ENCODE measurements at regions of chr16 and their contacts with region 1.

Region 1: DNA sequence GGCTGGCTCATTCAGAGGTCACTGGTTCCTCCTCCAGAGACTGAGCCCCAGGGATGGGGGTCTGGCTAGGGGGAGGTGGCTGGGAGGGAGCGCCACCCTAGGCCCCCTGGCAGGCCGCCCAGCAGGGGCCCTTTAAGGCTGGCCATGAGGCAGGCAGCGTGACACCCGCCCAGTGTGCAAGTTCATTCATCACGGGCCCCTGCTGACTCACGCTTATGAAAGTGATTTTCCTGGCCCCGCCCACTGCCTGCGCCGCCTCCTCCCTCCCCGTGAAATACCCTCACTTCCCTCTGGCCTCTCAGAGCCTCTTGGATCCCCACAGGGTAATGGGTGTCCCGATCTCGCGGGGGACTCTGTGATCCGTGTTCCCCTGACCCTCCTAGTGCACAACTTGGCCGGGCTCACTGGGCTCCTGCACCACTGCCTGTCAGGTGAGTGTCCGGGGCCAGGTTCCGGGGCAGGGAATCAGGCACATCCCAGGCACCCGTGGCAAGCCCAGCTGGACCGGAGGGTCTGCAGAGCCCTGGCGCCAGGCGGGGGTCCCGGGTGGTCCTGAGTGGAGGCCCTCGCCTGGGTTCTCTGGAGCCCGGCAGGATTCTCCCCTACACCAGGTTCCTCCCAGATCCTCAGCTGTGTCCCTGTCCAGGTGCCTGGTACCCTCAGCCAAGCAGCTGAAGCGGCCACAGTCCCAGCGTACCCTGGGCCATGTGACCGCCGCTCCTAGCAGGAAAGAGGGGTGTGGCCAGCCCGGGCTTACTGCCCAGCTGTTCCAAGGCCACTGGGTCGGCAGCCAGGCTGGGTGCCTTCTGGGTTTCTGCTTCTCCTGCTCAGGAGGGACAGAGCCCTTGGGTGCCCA is at the start of gene OSGIN1:
- DNase-seq: peak; percentile 90 to 94
- ATAC-seq: peak; percentile 90 to 96 (median 94)
- H3K4me3 ChIP-seq: peak within 1 kb of the TSS; percentile 43 to 73 (median 63)
- H3K27ac ChIP-seq: peak within 1 kb of the TSS; percentile 78 to 97 (median 92)
- H3K4me1 ChIP-seq: peaks cover 11 to 45% (median 31%) of the 10 kb centered on the region in 9 donors
- H3K27me3 ChIP-seq: no peaks in the 10 kb centered on the region
- CTCF ChIP-seq: no peak
- total RNA-seq, gene OSGIN1: 3.2 to 14.5 (median 5.3) TPM

Region 2: GRCh38 chr16:83913245-83913633 is 39.9 kb before region 1 on chr16:
- intact Hi-C with region 1: loop called in 1 of 10 experiments (anchors 5 kb)
- DNase-seq: peak; percentile 78 to 85
- ATAC-seq: peak; percentile 94 to 97 (median 96)
- H3K4me3 ChIP-seq: no peak overlapping the region
- H3K27ac ChIP-seq: peak overlapping the region; percentile 24 to 92 (median 74)
- H3K4me1 ChIP-seq: peaks cover 2 to 33% (median 15%) of the 10 kb centered on the region in 9 donors
- H3K27me3 ChIP-seq: no peaks in the 10 kb centered on the region
- CTCF ChIP-seq: peak in 2 of 9 donors; percentile 16 to 17

Region 3: GRCh38 chr16:83926726-83927397 is 26.3 kb before region 1 on chr16:
- intact Hi-C with region 1: loop called in 1 of 10 experiments (anchors 2 kb)
- DNase-seq: peak; percentile 58 to 76
- ATAC-seq: peak; percentile 49 to 76 (median 70)
- H3K4me3 ChIP-seq: no peak overlapping the region
- H3K27ac ChIP-seq: no peak overlapping the region
- H3K4me1 ChIP-seq: peaks cover 0 to 33% (median 17%) of the 10 kb centered on the region in 9 donors
- H3K27me3 ChIP-seq: no peaks in the 10 kb centered on the region
- CTCF ChIP-seq: peak; percentile 87 to 97 (median 96)

Region 4: GRCh38 chr16:83996481-83997252 is 43.5 kb after region 1 on chr16:
- intact Hi-C with region 1: no loop called
- DNase-seq: no peak
- ATAC-seq: no peak
- H3K4me3 ChIP-seq: no peak overlapping the region
- H3K27ac ChIP-seq: no peak overlapping the region
- H3K4me1 ChIP-seq: peaks cover 0 to 27% (median 10%) of the 10 kb centered on the region in 9 donors
- H3K27me3 ChIP-seq: peaks cover 0 to 35% (median 12%) of the 10 kb centered on the region in 7 donors
- CTCF ChIP-seq: no peak

Region 5: GRCh38 chr16:84340325-84341040 is 387.3 kb after region 1 on chr16:
- intact Hi-C with region 1: no loop called
- DNase-seq: no peak
- ATAC-seq: no peak
- H3K4me3 ChIP-seq: no peak overlapping the region
- H3K27ac ChIP-seq: no peak overlapping the region
- H3K4me1 ChIP-seq: no peaks in the 10 kb centered on the region
- H3K27me3 ChIP-seq: peaks cover 0 to 3% (median 0%) of the 10 kb centered on the region in 7 donors
- CTCF ChIP-seq: no peak